ENCODE measurements at regions of chr1 and their contacts with region 1.

Region 1: DNA sequence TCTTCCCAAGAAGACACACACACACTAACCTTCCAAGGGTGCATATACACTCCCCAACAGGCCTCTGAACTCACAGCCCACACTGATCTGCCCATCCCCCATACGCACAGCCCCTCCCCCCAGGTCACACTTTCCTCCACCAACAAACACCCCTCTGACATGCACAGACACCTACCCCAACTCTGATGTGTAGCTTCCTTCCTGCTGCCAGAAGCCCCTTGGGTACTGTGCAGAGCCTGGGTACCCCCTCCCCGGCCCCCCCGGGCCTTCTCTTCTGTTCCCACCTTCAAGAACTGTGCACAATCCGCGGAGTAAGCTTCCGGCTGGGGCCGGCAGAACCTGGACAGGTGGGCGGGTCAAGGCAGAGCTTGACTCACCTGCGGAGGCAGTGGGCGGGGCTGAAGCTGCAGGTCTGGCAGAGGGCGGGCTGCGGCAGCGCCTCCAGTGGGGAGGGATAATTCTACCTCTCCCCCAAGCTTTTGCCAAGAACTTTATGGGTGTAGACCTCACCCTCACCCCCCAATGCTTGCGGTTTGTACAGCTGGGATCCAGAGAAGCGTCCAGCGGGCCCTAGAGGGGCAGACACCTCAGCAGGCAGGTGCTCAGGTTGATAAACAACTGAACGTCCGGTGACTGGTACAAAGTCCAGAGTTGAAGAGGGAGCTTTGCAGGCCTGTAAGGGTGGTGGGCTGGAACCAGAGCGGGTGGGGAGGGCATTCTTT is at the start of gene C1orf210:
- DNase-seq: peak; percentile 93 to 94
- H3K4me3 ChIP-seq: peak within 1 kb of the TSS; percentile 53
- H3K4me3 Mint-ChIP-seq: peak within 1 kb of the TSS; percentile 92
- H3K27ac Mint-ChIP-seq: peak within 1 kb of the TSS; percentile 93
- H3K4me1 ChIP-seq: peaks cover 20% of the 10 kb centered on the region
- H3K4me1 Mint-ChIP-seq: peaks cover 15% of the 10 kb centered on the region
- H3K27me3 ChIP-seq: no peaks in the 10 kb centered on the region
- H3K27me3 Mint-ChIP-seq: no peaks in the 10 kb centered on the region
- CTCF ChIP-seq: peak in 1 of 2 experiments; percentile 71
- total RNA-seq, gene C1orf210: 7.8 and 9.6 TPM in 2 replicates

Region 2: GRCh38 chr1:43238085-43238484 is 47.3 kb before region 1 on chr1:
- CTCF ChIA-PET with region 1: interaction called, 9 read pairs
- POLR2A ChIA-PET with region 1: no interaction called
- intact Hi-C with region 1: loop called (anchors 10 kb)
- DNase-seq: peak; percentile 72 to 73
- H3K4me3 ChIP-seq: no peak overlapping the region
- H3K4me3 Mint-ChIP-seq: no peak overlapping the region
- H3K27ac Mint-ChIP-seq: no peak overlapping the region
- H3K4me1 ChIP-seq: no peaks in the 10 kb centered on the region
- H3K4me1 Mint-ChIP-seq: no peaks in the 10 kb centered on the region
- H3K27me3 ChIP-seq: no peaks in the 10 kb centered on the region
- H3K27me3 Mint-ChIP-seq: no peaks in the 10 kb centered on the region
- CTCF ChIP-seq: peak; percentile 39 to 69

Region 3: DNA sequence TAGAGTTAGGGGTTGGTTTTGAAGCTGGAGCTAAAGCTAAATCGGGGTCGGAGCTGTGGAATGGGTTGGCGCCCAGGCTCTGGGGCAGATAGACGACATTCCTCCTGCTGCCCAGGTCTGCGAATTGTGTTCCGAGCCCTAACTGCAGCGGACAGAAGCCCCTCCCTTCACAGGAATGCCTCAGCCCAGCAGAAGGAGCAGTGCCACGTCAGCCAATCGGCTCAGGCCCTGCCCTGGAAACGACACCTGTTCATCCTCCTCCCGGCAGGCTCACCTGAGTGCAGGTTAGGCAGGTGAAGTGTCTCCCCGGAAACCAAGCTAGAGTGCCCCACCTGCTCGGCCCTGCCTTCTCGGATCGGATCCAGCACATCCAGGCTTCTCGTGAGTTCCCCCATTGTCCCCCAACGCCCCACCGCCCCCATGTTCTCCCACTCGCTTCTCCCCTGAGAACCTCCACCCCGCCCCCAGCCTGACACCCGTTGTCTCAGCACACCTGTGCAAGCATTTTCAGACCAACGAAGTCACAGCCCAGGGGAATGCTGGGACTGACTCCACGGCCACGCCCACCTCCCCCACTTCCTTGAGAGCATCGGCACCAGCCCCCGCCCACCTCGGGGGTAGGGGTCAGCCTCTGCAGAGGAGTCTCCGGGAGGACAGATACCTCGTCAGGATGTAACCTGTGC is 14.9 kb before region 1 on chr1:
- CTCF ChIA-PET with region 1: interaction called, 6 read pairs
- POLR2A ChIA-PET with region 1: interaction called, 12 read pairs
- intact Hi-C with region 1: loop called (anchors 1 kb)
- DNase-seq: peak; percentile 91 to 95
- H3K4me3 ChIP-seq: peak overlapping the region; percentile 45
- H3K4me3 Mint-ChIP-seq: peak overlapping the region; percentile 87
- H3K27ac Mint-ChIP-seq: peak overlapping the region; percentile 99
- H3K4me1 ChIP-seq: peaks cover 16% of the 10 kb centered on the region
- H3K4me1 Mint-ChIP-seq: peaks cover 17% of the 10 kb centered on the region
- H3K27me3 ChIP-seq: no peaks in the 10 kb centered on the region
- H3K27me3 Mint-ChIP-seq: no peaks in the 10 kb centered on the region
- CTCF ChIP-seq: no peak

Region 4: GRCh38 chr1:43296207-43296606 is 10.8 kb after region 1 on chr1:
- CTCF ChIA-PET with region 1: no interaction called
- POLR2A ChIA-PET with region 1: no interaction called
- intact Hi-C with region 1: no loop called
- DNase-seq: no peak
- H3K4me3 ChIP-seq: no peak overlapping the region
- H3K4me3 Mint-ChIP-seq: no peak overlapping the region
- H3K27ac Mint-ChIP-seq: no peak overlapping the region
- H3K4me1 ChIP-seq: no peaks in the 10 kb centered on the region
- H3K4me1 Mint-ChIP-seq: no peaks in the 10 kb centered on the region
- H3K27me3 ChIP-seq: no peaks in the 10 kb centered on the region
- H3K27me3 Mint-ChIP-seq: no peaks in the 10 kb centered on the region
- CTCF ChIP-seq: no peak

Region 5: DNA sequence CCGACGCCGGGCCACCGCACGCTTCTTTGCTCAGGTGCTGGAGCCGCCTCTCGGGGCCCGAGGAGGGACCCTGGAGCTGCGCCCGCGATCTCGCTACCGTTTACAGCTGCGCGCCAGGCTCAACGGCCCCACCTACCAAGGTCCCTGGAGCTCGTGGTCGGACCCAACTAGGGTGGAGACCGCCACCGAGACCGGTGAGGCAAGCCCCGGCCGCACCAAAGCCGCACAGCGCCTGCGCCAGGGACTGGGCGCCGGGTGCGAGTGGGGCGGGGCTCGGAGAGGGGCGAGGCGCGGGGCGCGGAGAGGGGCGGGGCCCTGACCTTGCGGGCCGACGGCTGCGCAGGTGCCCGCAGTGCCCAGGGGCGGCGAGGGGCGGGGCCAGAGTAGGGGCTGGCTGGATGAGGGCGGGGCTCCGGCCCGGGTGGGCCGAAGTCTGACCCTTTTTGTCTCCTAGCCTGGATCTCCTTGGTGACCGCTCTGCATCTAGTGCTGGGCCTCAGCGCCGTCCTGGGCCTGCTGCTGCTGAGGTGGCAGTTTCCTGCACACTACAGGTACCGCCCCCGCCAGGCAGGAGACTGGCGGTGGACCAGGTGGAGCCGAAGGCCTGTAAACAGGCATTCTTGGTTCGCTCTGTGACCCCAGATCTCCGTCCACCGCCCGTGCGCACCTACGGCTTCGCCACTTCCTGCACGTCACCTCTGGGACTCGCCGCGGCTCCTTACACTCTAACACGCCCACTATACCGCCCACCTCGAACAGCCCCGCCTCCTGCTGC is 63.6 kb after region 1 on chr1:
- CTCF ChIA-PET with region 1: interaction called, 10 read pairs
- POLR2A ChIA-PET with region 1: no interaction called
- intact Hi-C with region 1: loop called (anchors 2 kb)
- DNase-seq: peak; percentile 93 to 94
- H3K4me3 ChIP-seq: peak overlapping the region; percentile 48
- H3K4me3 Mint-ChIP-seq: peak overlapping the region; percentile 74
- H3K27ac Mint-ChIP-seq: peak overlapping the region; percentile 96
- H3K4me1 ChIP-seq: no peaks in the 10 kb centered on the region; the same call in 1 of the 2 replicates
- H3K4me1 Mint-ChIP-seq: peaks cover 23% of the 10 kb centered on the region
- H3K27me3 ChIP-seq: no peaks in the 10 kb centered on the region
- H3K27me3 Mint-ChIP-seq: no peaks in the 10 kb centered on the region
- CTCF ChIP-seq: no peak

Measured in Caco-2 (cell line).